ENCODE measurements at regions of chr15 and their contacts with region 1.

Region 1: DNA sequence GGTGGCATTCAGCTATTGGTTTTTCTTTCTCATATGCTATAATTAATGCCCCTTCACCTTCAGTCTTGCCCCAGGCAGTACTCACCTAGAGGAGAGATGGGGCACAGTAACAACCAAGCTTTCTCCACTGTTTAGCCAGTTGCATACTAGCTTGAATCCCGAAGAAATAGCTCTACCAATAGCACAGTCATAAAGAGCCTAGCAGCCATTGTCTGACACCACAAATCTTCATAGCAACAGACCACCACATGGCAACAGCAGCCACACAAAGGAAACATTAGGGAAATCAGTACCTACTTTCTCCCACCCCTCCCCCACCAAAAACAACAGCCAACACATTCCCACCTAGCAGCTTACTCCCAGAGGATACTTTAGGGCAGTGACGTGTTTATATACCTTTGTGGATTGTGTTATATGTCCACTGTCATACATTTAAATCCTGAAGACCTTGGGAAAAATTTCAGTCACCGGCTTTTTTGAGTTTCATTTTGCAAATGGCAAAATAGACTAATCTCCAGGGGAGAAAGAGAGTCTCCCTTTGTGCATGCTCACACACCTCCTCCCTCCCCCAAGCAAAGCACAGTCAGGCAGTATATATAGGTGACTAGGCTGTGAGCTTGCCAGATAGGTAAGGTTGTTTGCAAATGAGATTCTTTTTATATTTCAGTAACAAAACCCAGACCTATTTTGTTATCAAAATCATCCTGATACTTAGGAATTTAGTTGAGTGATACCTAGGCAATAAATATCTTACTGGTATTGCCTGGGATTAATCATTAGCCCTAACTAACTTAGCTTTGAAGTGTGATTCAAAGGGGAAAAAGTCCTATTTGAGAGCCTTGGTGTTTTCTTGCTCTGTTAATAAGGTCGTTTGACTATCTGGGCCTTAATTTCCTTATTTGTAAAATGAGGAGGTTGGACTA is 140.6 kb downstream of the RBPMS2 start:
- DNase-seq: peak; percentile 64
- ATAC-seq: peak; percentile 89
- H3K4me3 Mint-ChIP-seq: peak overlapping the region; percentile 47
- H3K27ac Mint-ChIP-seq: peak overlapping the region; percentile 98
- H3K4me1 Mint-ChIP-seq: peaks cover 47% of the 10 kb centered on the region
- H3K27me3 Mint-ChIP-seq: no peaks in the 10 kb centered on the region
- CTCF ChIP-seq: no peak

Region 2: GRCh38 chr15:64571857-64572291 is 63.0 kb before region 1 on chr15:
- CTCF ChIA-PET with region 1: no interaction called
- POLR2A ChIA-PET with region 1: no interaction called
- DNase-seq: no peak
- ATAC-seq: no peak
- H3K4me3 Mint-ChIP-seq: no peak overlapping the region
- H3K27ac Mint-ChIP-seq: peak overlapping the region; percentile 68
- H3K4me1 Mint-ChIP-seq: peaks cover 32% of the 10 kb centered on the region
- H3K27me3 Mint-ChIP-seq: no peaks in the 10 kb centered on the region
- CTCF ChIP-seq: no peak

Region 3: GRCh38 chr15:64651573-64652260 is 16.9 kb after region 1 on chr15:
- CTCF ChIA-PET with region 1: interaction called, 24 read pairs
- POLR2A ChIA-PET with region 1: interaction called, 4 read pairs
- DNase-seq: no peak
- ATAC-seq: peak; percentile 91
- H3K4me3 Mint-ChIP-seq: no peak overlapping the region
- H3K27ac Mint-ChIP-seq: peak overlapping the region; percentile 97
- H3K4me1 Mint-ChIP-seq: peaks cover 21% of the 10 kb centered on the region
- H3K27me3 Mint-ChIP-seq: no peaks in the 10 kb centered on the region
- CTCF ChIP-seq: no peak